ENCODE measurements at regions of chr17 and their contacts with region 1.

Region 1: DNA sequence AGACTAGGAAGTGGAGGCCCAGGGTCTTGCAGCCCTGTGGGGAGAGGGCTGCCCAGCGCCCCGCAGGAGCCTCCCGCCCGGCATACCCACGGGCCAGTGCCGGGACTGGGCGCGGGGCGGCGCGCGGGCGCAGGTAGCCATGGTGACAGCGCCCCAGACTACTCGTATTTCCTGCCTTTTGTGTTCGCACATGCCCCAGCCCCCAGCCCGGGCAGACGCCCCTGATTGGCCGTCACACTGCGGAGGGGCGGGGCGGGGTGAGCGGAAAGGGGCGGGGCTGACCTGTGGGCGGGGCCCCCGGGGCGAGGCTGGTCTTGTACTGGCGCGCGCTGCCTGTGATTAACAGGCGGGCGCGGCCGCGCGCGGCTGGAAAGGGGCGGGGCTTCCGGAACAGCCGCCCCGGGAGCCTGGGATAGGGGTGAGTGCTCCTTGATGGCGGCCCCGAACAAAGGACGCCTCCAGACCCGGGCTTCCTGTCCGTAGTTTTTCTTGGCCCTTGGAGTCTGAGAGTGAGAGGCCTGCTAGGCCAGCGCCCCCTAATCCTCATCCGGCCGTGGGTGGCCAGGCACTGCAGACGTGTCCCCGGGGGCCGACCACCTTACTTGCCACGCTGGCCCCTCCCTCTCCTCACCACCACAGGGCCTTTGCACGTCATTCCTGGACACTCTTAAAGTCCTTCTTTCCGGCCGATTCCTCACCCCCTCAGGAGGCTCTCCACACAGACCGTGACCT is 71.0 kb downstream of the RAI1 start:
- DNase-seq: peak; percentile 96
- H3K4me3 ChIP-seq: peak overlapping the region in 2 of 3 experiments; percentile 6 to 14
- H3K27ac ChIP-seq: peak overlapping the region; percentile 81
- H3K4me1 ChIP-seq: peaks cover 39% of the 10 kb centered on the region
- H3K27me3 ChIP-seq: no peaks in the 10 kb centered on the region
- CTCF ChIP-seq: peak; percentile 29 to 54
- POLR2A ChIP-seq: peak; percentile 33

Region 2: GRCh38 chr17:17264430-17264829 is 487.8 kb before region 1 on chr17:
- CTCF ChIA-PET with region 1: no interaction called
- POLR2A ChIA-PET with region 1: no interaction called
- dilution Hi-C with region 1: no loop called
- intact Hi-C with region 1: no loop called
- DNase-seq: no peak
- H3K4me3 ChIP-seq: no peak overlapping the region
- H3K27ac ChIP-seq: no peak overlapping the region
- H3K4me1 ChIP-seq: no peaks in the 10 kb centered on the region
- H3K27me3 ChIP-seq: no peaks in the 10 kb centered on the region
- CTCF ChIP-seq: no peak
- POLR2A ChIP-seq: no peak

Region 3: GRCh38 chr17:17694169-17695081 is 57.8 kb before region 1 on chr17:
- CTCF ChIA-PET with region 1: no interaction called
- POLR2A ChIA-PET with region 1: interaction called, 3 read pairs
- dilution Hi-C with region 1: no loop called
- intact Hi-C with region 1: loop called (anchors 1 kb)
- DNase-seq: peak; percentile 83
- H3K4me3 ChIP-seq: peak overlapping the region; percentile 40 to 55 (median 48)
- H3K27ac ChIP-seq: peak overlapping the region; percentile 88
- H3K4me1 ChIP-seq: peaks cover 42% of the 10 kb centered on the region
- H3K27me3 ChIP-seq: no peaks in the 10 kb centered on the region
- CTCF ChIP-seq: no peak
- POLR2A ChIP-seq: peak; percentile 62

Region 4: GRCh38 chr17:17712268-17712924 is 39.9 kb before region 1 on chr17:
- CTCF ChIA-PET with region 1: no interaction called
- POLR2A ChIA-PET with region 1: no interaction called
- dilution Hi-C with region 1: no loop called
- intact Hi-C with region 1: loop called (anchors 1 kb)
- DNase-seq: peak; percentile 94
- H3K4me3 ChIP-seq: no peak overlapping the region
- H3K27ac ChIP-seq: peak overlapping the region; percentile 98
- H3K4me1 ChIP-seq: peaks cover 33% of the 10 kb centered on the region
- H3K27me3 ChIP-seq: no peaks in the 10 kb centered on the region
- CTCF ChIP-seq: no peak
- POLR2A ChIP-seq: no peak

Region 5: DNA sequence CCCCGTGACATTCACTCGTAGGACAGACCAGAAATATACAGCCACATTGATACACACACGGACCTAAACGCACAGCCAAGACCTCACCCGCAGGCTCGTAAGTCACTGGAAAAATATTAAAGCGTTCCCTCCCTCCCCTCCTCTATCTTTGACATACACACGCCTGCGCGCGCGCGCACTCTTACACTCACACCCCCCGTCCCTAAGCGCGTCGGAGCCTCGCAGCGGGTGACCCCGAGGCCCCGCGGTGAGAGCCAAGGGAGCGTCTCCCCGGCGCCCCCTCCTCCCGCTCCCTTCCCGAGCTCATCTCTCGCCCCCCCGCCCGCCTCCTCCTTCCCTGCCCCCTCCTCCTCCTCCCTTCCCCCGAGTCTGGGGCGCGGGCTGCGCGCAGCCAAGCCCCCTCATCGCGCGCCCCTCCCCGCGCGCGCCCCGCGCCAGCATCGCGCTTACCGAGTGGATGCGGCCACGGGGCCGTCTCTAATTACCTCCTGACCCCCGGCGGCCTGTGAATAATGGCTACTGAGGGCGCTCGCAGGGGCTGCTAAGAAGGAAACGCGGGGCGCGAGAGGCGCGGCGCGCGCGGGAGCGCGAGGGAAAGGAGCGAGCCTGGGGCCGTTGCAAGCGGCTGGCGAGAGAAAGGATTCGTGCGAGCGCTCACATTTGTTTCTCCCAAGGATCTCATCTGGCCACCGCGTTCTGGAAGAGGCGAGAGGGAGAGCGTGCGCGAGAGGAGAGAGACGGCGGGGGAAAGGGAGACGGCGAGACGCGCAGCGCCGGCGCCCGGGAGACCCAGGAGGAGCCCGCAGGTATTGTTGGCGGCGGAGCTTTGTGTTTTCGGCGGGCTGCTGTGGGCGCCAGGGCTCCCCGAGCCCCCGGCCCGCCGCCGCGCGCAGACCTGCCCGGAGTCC is 28.6 kb before region 1 on chr17:
- CTCF ChIA-PET with region 1: interaction called, 4 read pairs
- POLR2A ChIA-PET with region 1: no interaction called
- dilution Hi-C with region 1: no loop called
- intact Hi-C with region 1: loop called (anchors 1 kb)
- DNase-seq: peak; percentile 61
- H3K4me3 ChIP-seq: peak overlapping the region; percentile 41 to 57 (median 50)
- H3K27ac ChIP-seq: peak overlapping the region; percentile 79
- H3K4me1 ChIP-seq: peaks cover 34% of the 10 kb centered on the region
- H3K27me3 ChIP-seq: no peaks in the 10 kb centered on the region
- CTCF ChIP-seq: no peak
- POLR2A ChIP-seq: peak; percentile 12